CD4-positive, alpha-beta T cell (primary cell): ENCODE measurements at regions of chr3 and their contacts with region 1.

Region 1: DNA sequence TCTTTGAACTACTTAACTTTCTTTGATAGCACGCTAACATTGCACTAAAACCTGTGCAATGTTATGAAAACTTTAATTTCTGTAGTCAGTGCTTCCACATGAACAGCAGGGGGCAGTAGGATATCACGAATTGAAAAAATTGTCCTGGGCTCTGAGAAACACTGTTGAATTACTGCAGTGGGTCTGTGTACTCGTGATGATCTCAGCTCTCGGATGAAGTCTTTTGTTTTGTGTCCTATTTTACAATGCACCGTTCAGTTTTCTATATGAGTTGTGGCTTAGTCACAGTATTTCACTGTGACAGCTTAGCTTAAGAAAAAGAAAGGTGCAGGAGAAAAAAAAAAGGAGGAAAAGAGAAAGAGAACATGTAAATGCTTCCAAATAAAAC is 141.3 kb upstream of the CCDC54 start:
- DNase-seq: peak in 11 of 14 experiments; percentile 4 to 82 (median 39)
- ATAC-seq: peak; percentile 71
- H3K4me3 ChIP-seq: peak overlapping the region; percentile 30
- H3K4me3 Mint-ChIP-seq: peak overlapping the region; percentile 46
- H3K27ac ChIP-seq: no peak overlapping the region
- H3K27ac Mint-ChIP-seq: no peak overlapping the region
- H3K4me1 ChIP-seq: peaks cover 9% of the 10 kb centered on the region
- H3K4me1 Mint-ChIP-seq: peaks cover 7% of the 10 kb centered on the region
- H3K27me3 ChIP-seq: no peaks in the 10 kb centered on the region
- H3K27me3 Mint-ChIP-seq: peaks cover 2% of the 10 kb centered on the region
- CTCF ChIP-seq: peak; percentile 93

Region 2: GRCh38 chr3:107172411-107172810 is 63.5 kb before region 1 on chr3:
- CTCF ChIA-PET with region 1: no interaction called
- POLR2A ChIA-PET with region 1: no interaction called
- intact Hi-C with region 1: no loop called
- DNase-seq: no peak
- ATAC-seq: no peak
- H3K4me3 ChIP-seq: no peak overlapping the region
- H3K4me3 Mint-ChIP-seq: no peak overlapping the region
- H3K27ac ChIP-seq: no peak overlapping the region
- H3K27ac Mint-ChIP-seq: no peak overlapping the region
- H3K4me1 ChIP-seq: no peaks in the 10 kb centered on the region
- H3K4me1 Mint-ChIP-seq: no peaks in the 10 kb centered on the region
- H3K27me3 ChIP-seq: peaks cover 0 to 3% of the 10 kb centered on the region in 2 experiments
- H3K27me3 Mint-ChIP-seq: no peaks in the 10 kb centered on the region
- CTCF ChIP-seq: no peak

Region 3: DNA sequence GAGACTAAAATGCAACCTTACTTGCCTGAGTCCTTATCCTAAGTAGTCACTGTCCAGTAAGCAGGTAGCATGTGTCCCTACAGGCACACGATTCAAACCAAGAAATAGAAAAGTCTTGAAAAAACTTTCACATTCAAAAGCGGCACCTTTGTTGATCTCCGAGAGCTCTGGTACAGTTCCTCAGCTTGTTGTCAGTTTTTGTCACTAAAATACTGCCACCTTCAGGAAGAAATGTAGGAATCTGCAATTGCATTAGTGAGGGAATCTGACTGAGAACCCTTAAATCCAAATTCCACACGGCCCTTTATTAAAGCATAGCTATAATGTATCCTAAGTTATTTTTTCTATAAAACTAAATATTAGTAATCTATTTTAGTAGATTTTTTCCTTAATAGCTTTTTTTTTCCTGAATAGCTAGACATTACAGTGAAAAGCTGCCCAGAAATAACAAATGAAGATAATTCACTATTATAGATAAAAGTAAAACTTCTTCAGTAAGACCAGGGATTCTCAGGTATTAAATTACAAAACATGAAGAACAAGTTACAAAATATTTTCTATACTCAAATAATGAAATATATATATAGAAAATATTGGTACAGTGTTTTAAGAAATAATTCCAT is 185.4 kb after region 1 on chr3:
- CTCF ChIA-PET with region 1: interaction called, 6 read pairs
- POLR2A ChIA-PET with region 1: interaction called, 5 read pairs
- intact Hi-C with region 1: loop called (anchors 2 kb)
- DNase-seq: peak in 4 of 14 experiments; percentile 16 to 68 (median 66)
- ATAC-seq: peak; percentile 65
- H3K4me3 ChIP-seq: no peak overlapping the region
- H3K4me3 Mint-ChIP-seq: no peak overlapping the region
- H3K27ac ChIP-seq: no peak overlapping the region
- H3K27ac Mint-ChIP-seq: no peak overlapping the region
- H3K4me1 ChIP-seq: no peaks in the 10 kb centered on the region
- H3K4me1 Mint-ChIP-seq: peaks cover 3% of the 10 kb centered on the region
- H3K27me3 ChIP-seq: no peaks in the 10 kb centered on the region
- H3K27me3 Mint-ChIP-seq: peaks cover 3% of the 10 kb centered on the region
- CTCF ChIP-seq: peak; percentile 73

Region 4: GRCh38 chr3:107531917-107532469 is 296.1 kb after region 1 on chr3:
- CTCF ChIA-PET with region 1: no interaction called
- POLR2A ChIA-PET with region 1: no interaction called
- intact Hi-C with region 1: loop called in 1 of 2 experiments (anchors 5 kb)
- DNase-seq: no peak
- ATAC-seq: no peak
- H3K4me3 ChIP-seq: no peak overlapping the region
- H3K4me3 Mint-ChIP-seq: no peak overlapping the region
- H3K27ac ChIP-seq: no peak overlapping the region
- H3K27ac Mint-ChIP-seq: no peak overlapping the region
- H3K4me1 ChIP-seq: no peaks in the 10 kb centered on the region
- H3K4me1 Mint-ChIP-seq: peaks cover 56% of the 10 kb centered on the region
- H3K27me3 ChIP-seq: no peaks in the 10 kb centered on the region
- H3K27me3 Mint-ChIP-seq: no peaks in the 10 kb centered on the region
- CTCF ChIP-seq: no peak

Region 5: DNA sequence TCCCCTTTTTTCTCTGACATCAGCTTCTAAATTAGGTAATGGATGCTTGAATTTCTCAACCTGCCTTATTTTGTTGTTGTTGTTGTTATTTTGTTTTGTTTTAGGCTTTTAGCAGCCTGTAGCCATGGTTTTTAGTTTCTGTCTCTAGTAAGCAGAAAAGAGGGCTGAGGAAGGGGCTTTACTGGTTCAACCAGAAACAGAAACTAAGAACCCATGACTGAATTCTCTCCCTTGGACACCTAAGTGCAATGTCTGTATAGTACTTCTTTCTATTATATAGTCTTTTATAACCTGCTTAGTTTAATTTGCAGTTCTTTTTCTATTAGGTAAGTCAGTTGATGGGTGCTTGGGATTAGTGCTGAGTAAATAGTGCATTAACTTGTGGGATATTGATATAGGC is 415.9 kb after region 1 on chr3:
- CTCF ChIA-PET with region 1: no interaction called
- POLR2A ChIA-PET with region 1: no interaction called
- intact Hi-C with region 1: loop called in 1 of 2 experiments (anchors 10 kb)
- DNase-seq: no peak
- ATAC-seq: no peak
- H3K4me3 ChIP-seq: no peak overlapping the region
- H3K4me3 Mint-ChIP-seq: no peak overlapping the region
- H3K27ac ChIP-seq: no peak overlapping the region
- H3K27ac Mint-ChIP-seq: peak overlapping the region; percentile 23
- H3K4me1 ChIP-seq: no peaks in the 10 kb centered on the region
- H3K4me1 Mint-ChIP-seq: peaks cover 32% of the 10 kb centered on the region
- H3K27me3 ChIP-seq: no peaks in the 10 kb centered on the region
- H3K27me3 Mint-ChIP-seq: no peaks in the 10 kb centered on the region
- CTCF ChIP-seq: no peak

Region 6: DNA sequence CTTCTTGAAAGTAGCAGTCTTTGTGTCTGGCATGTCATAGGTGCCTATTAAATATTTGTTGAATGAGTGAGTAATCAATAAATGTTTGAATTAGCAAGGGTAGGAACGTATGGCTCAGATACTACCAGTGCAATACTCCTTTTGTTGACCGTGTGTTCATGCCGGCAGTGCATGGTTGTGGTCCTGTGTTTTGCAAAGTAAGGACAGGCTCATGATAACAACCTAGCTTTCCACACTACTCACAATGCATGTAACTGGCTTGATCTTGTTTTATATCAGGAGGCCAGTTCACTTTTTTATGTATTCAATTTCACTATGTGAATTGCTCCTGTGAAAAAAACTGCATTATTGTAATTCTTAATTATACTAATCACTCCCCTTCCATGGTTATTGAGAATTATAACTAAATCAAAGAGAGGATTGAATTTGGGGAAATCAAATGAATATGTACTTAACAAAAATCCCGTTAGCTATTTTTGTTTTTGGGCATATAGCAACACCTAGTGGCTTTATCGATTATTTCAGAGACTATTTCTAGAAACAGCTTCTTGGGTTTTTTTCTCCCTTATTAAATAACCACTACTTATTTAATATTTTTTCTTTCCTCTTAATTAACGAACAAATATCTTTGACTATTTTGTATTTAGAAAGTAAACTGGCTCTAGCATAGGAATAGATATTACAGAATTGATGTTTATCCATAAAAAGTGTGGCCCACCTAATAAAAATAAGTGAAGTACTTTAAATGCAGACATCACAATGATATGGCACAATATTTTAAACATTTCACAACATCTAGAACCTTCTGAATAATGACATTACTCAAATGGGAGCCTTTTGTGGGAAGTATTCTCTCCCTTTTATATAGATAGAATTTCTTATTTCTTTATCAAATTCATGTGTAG is 505.3 kb after region 1 on chr3:
- CTCF ChIA-PET with region 1: no interaction called
- POLR2A ChIA-PET with region 1: no interaction called
- intact Hi-C with region 1: loop called (anchors 1 to 5 kb)
- DNase-seq: peak in 3 of 14 experiments; percentile 37 to 40 (median 40)
- ATAC-seq: no peak
- H3K4me3 ChIP-seq: no peak overlapping the region
- H3K4me3 Mint-ChIP-seq: no peak overlapping the region
- H3K27ac ChIP-seq: no peak overlapping the region
- H3K27ac Mint-ChIP-seq: no peak overlapping the region
- H3K4me1 ChIP-seq: no peaks in the 10 kb centered on the region
- H3K4me1 Mint-ChIP-seq: no peaks in the 10 kb centered on the region
- H3K27me3 ChIP-seq: no peaks in the 10 kb centered on the region
- H3K27me3 Mint-ChIP-seq: no peaks in the 10 kb centered on the region
- CTCF ChIP-seq: peak; percentile 71

Region 7: DNA sequence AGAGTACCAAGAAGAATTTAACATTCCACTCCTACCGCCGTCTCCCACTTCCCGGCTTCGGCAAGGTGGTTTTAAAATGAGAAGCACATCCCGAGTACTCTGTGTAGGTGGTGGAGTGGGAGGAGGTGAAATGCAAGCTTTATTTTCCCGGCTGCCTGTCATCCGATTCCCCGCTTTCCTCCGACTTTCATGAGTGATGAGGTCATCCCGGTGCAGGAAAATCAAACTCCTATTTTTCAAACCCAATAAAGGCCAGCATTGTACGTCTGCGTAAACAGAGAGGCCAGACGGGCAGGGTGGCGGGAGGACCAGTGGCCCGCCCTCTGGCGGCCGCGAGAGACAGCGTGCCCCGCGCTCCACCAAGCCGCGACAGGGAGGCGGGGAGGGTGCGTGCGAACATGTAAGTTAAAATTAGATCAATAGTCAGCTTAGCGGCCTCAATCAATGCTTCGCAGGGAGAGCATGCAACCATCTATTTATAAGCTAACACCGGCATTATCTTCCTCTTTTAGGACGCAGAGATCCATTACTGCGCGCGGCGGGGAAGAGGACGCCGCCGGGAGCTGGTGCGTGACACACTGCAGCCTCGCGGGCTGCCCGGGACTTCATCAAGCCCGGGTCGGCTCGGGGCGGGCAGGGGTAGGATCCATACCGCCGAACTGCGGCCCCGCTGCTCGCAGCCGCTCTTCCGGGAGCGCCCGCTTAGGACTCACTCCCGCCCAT is 691.6 kb after region 1 on chr3:
- CTCF ChIA-PET with region 1: no interaction called
- POLR2A ChIA-PET with region 1: interaction called, 4 read pairs
- intact Hi-C with region 1: loop called (anchors 1 to 2 kb)
- DNase-seq: peak; percentile 37 to 83 (median 56)
- ATAC-seq: peak; percentile 90
- H3K4me3 ChIP-seq: peak overlapping the region; percentile 68
- H3K4me3 Mint-ChIP-seq: peak overlapping the region; percentile 91
- H3K27ac ChIP-seq: no peak overlapping the region
- H3K27ac Mint-ChIP-seq: no peak overlapping the region
- H3K4me1 ChIP-seq: peaks cover 16% of the 10 kb centered on the region
- H3K4me1 Mint-ChIP-seq: peaks cover 14% of the 10 kb centered on the region
- H3K27me3 ChIP-seq: peaks cover 0 to 6% of the 10 kb centered on the region in 2 experiments
- H3K27me3 Mint-ChIP-seq: peaks cover 4% of the 10 kb centered on the region
- CTCF ChIP-seq: peak; percentile 94

Region 8: GRCh38 chr3:108477511-108478147 is 1241.7 kb after region 1 on chr3:
- CTCF ChIA-PET with region 1: no interaction called
- POLR2A ChIA-PET with region 1: no interaction called
- intact Hi-C with region 1: loop called (anchors 1 to 5 kb)
- DNase-seq: peak; percentile 23 to 78 (median 44)
- ATAC-seq: peak; percentile 89
- H3K4me3 ChIP-seq: no peak overlapping the region
- H3K4me3 Mint-ChIP-seq: no peak overlapping the region
- H3K27ac ChIP-seq: no peak overlapping the region
- H3K27ac Mint-ChIP-seq: no peak overlapping the region
- H3K4me1 ChIP-seq: no peaks in the 10 kb centered on the region
- H3K4me1 Mint-ChIP-seq: peaks cover 4% of the 10 kb centered on the region
- H3K27me3 ChIP-seq: no peaks in the 10 kb centered on the region
- H3K27me3 Mint-ChIP-seq: no peaks in the 10 kb centered on the region
- CTCF ChIP-seq: peak; percentile 72